ENCODE measurements at regions of chr1 and their contacts with region 1.

Region 1: GRCh38 chr1:45622524-45623394 is 1.1 kb downstream of the CCDC17 start:
- DNase-seq: no peak
- H3K4me3 ChIP-seq: no peak overlapping the region
- H3K27ac ChIP-seq: no peak overlapping the region
- H3K4me1 ChIP-seq: no peaks in the 10 kb centered on the region
- H3K27me3 ChIP-seq: no peaks in the 10 kb centered on the region
- CTCF ChIP-seq: no peak

Region 2: DNA sequence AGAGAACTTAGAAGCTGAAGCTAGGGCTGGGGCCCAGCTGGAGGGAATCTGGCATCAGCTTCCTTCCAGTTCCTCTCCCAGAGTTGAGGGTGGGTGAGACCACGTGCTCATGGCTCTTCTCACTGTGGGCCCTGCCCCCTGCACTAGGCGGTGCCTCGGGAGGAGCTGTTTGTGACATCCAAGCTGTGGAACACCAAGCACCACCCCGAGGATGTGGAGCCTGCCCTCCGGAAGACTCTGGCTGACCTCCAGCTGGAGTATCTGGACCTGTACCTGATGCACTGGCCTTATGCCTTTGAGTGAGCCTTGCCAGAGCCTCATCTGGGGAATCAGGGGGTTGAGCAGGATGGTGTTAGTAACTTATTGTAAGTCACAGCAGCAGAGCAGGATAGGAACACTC is 56.0 kb before region 1 on chr1:
- CTCF ChIA-PET with region 1: no interaction called
- POLR2A ChIA-PET with region 1: no interaction called
- intact Hi-C with region 1: no loop called
- DNase-seq: no peak
- H3K4me3 ChIP-seq: no peak overlapping the region
- H3K27ac ChIP-seq: no peak overlapping the region
- H3K4me1 ChIP-seq: no peaks in the 10 kb centered on the region
- H3K27me3 ChIP-seq: no peaks in the 10 kb centered on the region
- CTCF ChIP-seq: no peak

Region 3: GRCh38 chr1:45686317-45687013 is 63.7 kb after region 1 on chr1 and contains the start of gene GPBP1L1:
- CTCF ChIA-PET with region 1: no interaction called
- POLR2A ChIA-PET with region 1: no interaction called
- intact Hi-C with region 1: no loop called
- DNase-seq: peak; percentile 82 to 98
- H3K4me3 ChIP-seq: peak within 1 kb of the TSS; percentile 94
- H3K27ac ChIP-seq: peak within 1 kb of the TSS; percentile 95
- H3K4me1 ChIP-seq: peaks cover 16% of the 10 kb centered on the region
- H3K27me3 ChIP-seq: no peaks in the 10 kb centered on the region
- CTCF ChIP-seq: no peak
- total RNA-seq, gene GPBP1L1: 124 and 138 TPM in 2 replicates

Region 4: DNA sequence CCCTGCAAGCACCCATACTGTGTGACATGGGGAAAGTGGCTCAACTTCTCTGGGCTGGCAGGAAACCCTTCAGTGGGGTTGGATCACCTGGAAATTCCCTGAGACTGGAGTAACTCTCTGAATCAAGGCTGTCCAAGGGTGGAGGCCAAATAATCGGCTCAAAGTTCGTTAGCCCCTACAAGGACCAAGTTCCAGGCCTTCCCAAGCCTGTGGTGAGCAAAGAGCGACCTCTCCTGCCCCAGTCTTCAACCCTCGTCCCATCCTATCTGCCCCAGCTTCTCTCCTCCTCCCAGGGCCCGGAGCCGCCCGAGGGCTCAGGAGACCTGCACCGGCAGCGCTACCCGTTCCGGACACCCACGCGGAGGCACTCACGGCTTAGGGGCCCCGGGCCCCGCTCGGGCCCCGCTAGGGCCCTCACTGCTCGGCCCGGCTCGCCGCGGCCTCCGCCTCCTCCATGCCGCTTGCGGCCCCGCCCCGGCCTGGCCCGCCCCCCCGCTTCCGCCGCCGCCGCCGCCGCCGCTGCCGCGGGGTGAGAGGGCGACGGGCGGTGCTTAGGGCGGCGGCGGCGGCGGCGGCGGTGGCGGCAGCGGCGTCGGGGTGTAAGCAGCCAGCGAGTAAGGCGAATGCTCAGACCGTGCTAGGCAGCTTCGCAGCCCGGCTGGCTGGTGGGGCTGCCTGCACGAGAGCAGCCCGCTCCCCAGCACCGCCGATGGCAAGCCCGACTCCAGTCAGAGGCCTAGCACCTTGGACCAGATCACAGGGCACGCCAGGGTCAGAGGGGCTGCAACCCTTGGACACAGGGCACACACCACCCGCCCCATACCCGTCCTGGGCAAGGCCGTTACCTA is 575.4 kb after region 1 on chr1 and contains the start of gene POMGNT1:
- CTCF ChIA-PET with region 1: interaction called, 14 read pairs
- POLR2A ChIA-PET with region 1: no interaction called
- intact Hi-C with region 1: no loop called
- DNase-seq: peak in 1 of 2 experiments; percentile 83
- H3K4me3 ChIP-seq: peak within 1 kb of the TSS; percentile 87
- H3K27ac ChIP-seq: peak within 1 kb of the TSS; percentile 43
- H3K4me1 ChIP-seq: peaks cover 14% of the 10 kb centered on the region
- H3K27me3 ChIP-seq: no peaks in the 10 kb centered on the region
- CTCF ChIP-seq: no peak
- total RNA-seq, gene POMGNT1: 82.6 and 97.4 TPM in 2 replicates

Measured in PC-9 (cell line).